ENCODE measurements at regions of chr17 and their contacts with region 1.

Region 1: DNA sequence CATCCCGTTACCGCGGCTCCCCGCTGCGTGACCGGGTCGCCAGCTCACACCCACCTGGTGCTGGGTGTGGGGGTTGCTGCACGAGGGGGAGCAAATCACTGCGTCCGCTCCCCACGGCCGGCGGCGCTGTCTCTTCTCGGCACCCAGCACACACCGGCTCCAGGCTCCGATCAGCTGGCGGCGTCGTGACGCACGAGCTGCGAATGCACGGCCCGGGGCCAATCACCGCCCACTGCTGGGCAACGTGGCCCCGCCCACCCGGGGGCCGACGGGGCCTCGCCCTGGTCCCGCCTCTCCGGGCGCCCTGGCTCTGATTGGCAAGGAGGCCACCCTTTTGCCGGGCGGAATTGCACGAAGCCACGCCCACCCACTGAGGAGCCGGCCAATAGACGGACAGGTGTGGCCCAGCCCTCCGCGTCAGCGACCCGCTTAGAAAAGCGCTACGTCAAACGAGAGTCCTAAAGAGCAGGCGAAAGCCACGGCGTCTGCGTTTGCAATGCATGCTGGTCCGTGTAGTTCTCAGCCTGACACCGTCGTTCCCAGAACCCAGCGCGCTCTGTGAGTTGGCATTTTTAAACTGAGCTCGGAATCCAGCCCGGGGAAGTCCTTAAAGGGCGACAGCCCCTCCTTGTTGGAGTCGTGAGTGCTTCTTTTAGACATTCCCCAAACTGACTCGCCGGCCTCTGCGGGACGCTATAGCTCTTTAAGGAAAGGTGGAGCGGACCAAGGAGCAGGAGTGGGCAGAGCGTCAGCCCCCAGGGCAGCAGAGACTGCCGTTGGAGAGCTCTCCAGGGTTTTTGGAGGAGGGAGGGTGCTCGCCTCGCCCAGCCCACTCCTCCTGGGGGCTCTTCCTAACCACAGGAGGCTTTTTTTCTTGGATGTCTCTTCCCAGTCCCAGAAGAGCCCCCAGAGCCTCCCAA is 6.2 kb upstream of the TLCD2 start:
- DNase-seq: peak; percentile 99 to 100 (median 100)
- ATAC-seq: peak; percentile 92
- H3K4me3 ChIP-seq: peak overlapping the region; percentile 92
- H3K4me3 Mint-ChIP-seq: peak overlapping the region; percentile 87 to 98 (median 94)
- H3K27ac ChIP-seq: peak overlapping the region; percentile 73
- H3K27ac Mint-ChIP-seq: peak overlapping the region; percentile 70 to 99 (median 93)
- H3K4me1 ChIP-seq: peaks cover 17 to 26% of the 10 kb centered on the region in 2 donors
- H3K4me1 Mint-ChIP-seq: peaks cover 19 to 45% (median 24%) of the 10 kb centered on the region in 7 donors
- H3K27me3 ChIP-seq: peaks cover 0 to 7% of the 10 kb centered on the region in 2 donors
- H3K27me3 Mint-ChIP-seq: peaks cover 0 to 9% (median 6%) of the 10 kb centered on the region in 5 donors

Region 2: GRCh38 chr17:1455797-1456599 is 260.3 kb before region 1 on chr17 and contains the start of gene CRK:
- CTCF ChIA-PET with region 1: no interaction called
- POLR2A ChIA-PET with region 1: no interaction called
- intact Hi-C with region 1: loop called (anchors 1 kb)
- DNase-seq: peak; percentile 97 to 100 (median 99)
- ATAC-seq: peak; percentile 97
- H3K4me3 ChIP-seq: peak within 1 kb of the TSS; percentile 94
- H3K4me3 Mint-ChIP-seq: peak within 1 kb of the TSS; percentile 86 to 95 (median 90)
- H3K27ac ChIP-seq: peak within 1 kb of the TSS; percentile 97
- H3K27ac Mint-ChIP-seq: peak within 1 kb of the TSS; percentile 63 to 92 (median 86)
- H3K4me1 ChIP-seq: peaks cover 18 to 37% of the 10 kb centered on the region in 2 donors
- H3K4me1 Mint-ChIP-seq: peaks cover 28 to 64% (median 48%) of the 10 kb centered on the region in 7 donors
- H3K27me3 ChIP-seq: no peaks in the 10 kb centered on the region
- H3K27me3 Mint-ChIP-seq: peaks cover 0 to 23% (median 4%) of the 10 kb centered on the region in 5 donors
- total RNA-seq, gene CRK: 16.9 to 29.0 (median 20.9) TPM

Region 3: DNA sequence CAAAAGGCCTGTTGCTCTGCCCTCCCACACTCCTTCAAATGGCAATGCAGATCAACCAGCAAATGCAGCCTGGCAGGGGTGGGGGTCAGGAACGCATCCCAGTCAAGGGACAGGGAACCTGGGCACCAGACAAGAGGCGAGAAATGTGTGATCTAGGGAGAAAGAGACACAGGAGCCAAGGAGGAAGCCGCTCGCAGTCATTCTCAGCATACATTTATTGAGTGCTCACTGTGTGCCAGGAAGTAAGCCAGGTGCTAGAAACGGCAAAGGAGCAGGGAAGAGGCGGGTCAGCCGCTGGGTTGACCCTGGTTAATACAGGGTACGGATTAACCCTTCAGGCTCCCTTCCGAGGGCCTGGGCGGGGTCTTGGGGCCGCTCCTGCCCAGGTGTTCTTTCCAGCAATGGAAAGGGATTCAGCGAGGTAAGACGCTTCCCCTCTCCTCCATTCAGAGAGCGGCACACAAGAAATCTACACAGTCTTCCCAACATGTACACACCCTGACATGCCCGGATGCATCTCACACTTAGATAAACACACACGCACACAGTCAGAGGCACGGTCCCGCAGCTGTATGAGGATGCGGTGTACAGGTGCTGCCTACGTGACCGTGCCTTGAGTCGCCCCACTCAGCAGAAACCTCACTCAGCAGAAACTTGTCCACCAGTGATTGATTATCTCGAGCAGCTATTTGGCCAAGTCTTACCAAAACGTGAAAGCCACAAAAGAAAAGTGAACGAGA is 147.1 kb before region 1 on chr17:
- CTCF ChIA-PET with region 1: no interaction called
- POLR2A ChIA-PET with region 1: no interaction called
- intact Hi-C with region 1: no loop called
- DNase-seq: no peak
- ATAC-seq: no peak
- H3K4me3 ChIP-seq: no peak overlapping the region
- H3K4me3 Mint-ChIP-seq: no peak overlapping the region
- H3K27ac ChIP-seq: no peak overlapping the region
- H3K27ac Mint-ChIP-seq: peak overlapping the region in 3 of 9 donors; percentile 23 to 63 (median 41)
- H3K4me1 ChIP-seq: peaks cover 5 to 7% of the 10 kb centered on the region in 2 donors
- H3K4me1 Mint-ChIP-seq: peaks cover 16 to 32% (median 21%) of the 10 kb centered on the region in 7 donors
- H3K27me3 ChIP-seq: no peaks in the 10 kb centered on the region
- H3K27me3 Mint-ChIP-seq: peaks cover 0 to 3% (median 0%) of the 10 kb centered on the region in 5 donors

Region 4: GRCh38 chr17:1628856-1629646 is 87.3 kb before region 1 on chr17:
- CTCF ChIA-PET with region 1: no interaction called
- POLR2A ChIA-PET with region 1: interaction called, 7 read pairs
- intact Hi-C with region 1: loop called in 1 of 2 experiments (anchors 1 kb)
- DNase-seq: peak; percentile 69 to 89 (median 84)
- ATAC-seq: peak; percentile 84
- H3K4me3 ChIP-seq: peak overlapping the region; percentile 83
- H3K4me3 Mint-ChIP-seq: peak overlapping the region; percentile 92 to 96 (median 94)
- H3K27ac ChIP-seq: peak overlapping the region; percentile 74
- H3K27ac Mint-ChIP-seq: peak overlapping the region; percentile 73 to 95 (median 87)
- H3K4me1 ChIP-seq: peaks cover 5 to 20% of the 10 kb centered on the region in 2 donors
- H3K4me1 Mint-ChIP-seq: peaks cover 17 to 26% (median 22%) of the 10 kb centered on the region in 7 donors
- H3K27me3 ChIP-seq: no peaks in the 10 kb centered on the region
- H3K27me3 Mint-ChIP-seq: peaks cover 0 to 59% (median 0%) of the 10 kb centered on the region in 5 donors

Region 5: GRCh38 chr17:1684378-1685189 is 31.8 kb before region 1 on chr17 and contains the start of gene PRPF8:
- CTCF ChIA-PET with region 1: interaction called, 4 read pairs
- POLR2A ChIA-PET with region 1: interaction called, 32 read pairs
- intact Hi-C with region 1: loop called (anchors 1 kb)
- DNase-seq: peak; percentile 89 to 99 (median 99)
- ATAC-seq: peak; percentile 99
- H3K4me3 ChIP-seq: peak within 1 kb of the TSS; percentile 96
- H3K4me3 Mint-ChIP-seq: peak within 1 kb of the TSS; percentile 89 to 100 (median 97)
- H3K27ac ChIP-seq: peak within 1 kb of the TSS; percentile 100
- H3K27ac Mint-ChIP-seq: peak within 1 kb of the TSS; percentile 95 to 100 (median 98)
- H3K4me1 ChIP-seq: peaks cover 10 to 24% of the 10 kb centered on the region in 2 donors
- H3K4me1 Mint-ChIP-seq: peaks cover 32 to 59% (median 48%) of the 10 kb centered on the region in 7 donors
- H3K27me3 ChIP-seq: no peaks in the 10 kb centered on the region
- H3K27me3 Mint-ChIP-seq: no peaks in the 10 kb centered on the region
- total RNA-seq, gene PRPF8: 388 to 554 (median 460) TPM

Region 6: DNA sequence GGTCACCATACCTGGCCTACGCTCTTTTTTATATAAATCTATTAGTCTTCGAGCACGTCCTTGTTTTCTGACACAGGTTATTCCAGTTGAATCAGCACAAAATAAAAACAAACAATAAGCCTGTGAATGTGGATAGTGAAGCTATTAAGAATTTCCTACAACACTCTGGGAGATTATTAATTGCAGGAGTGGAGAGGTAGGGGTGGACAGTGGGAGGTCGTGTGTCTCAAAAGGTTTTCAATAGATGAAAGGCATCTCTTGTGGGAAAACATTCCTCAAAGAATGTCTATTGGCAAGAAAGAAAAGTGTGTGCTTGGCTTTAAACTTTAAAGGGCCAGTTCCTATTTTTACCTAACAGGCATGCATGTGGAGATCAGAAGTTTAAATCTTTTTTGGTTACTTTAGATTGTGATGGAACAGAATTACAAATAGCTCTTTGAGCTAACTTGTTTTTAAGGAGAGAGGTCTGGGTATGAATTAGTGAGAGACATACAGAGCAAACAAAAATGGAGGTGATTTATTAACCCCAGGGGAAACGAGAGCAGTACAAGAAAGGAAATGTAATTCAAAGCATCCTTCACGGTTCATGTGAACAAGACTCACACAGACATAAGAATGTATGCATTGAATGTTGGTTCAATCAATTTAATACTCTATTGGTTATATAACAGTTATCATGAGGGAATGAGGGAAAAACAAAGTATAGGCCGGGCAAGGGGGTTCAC is 104.4 kb after region 1 on chr17:
- CTCF ChIA-PET with region 1: interaction called, 4 read pairs
- POLR2A ChIA-PET with region 1: no interaction called
- intact Hi-C with region 1: loop called (anchors 2 kb)
- DNase-seq: no peak
- ATAC-seq: no peak
- H3K4me3 ChIP-seq: no peak overlapping the region
- H3K4me3 Mint-ChIP-seq: no peak overlapping the region
- H3K27ac ChIP-seq: no peak overlapping the region
- H3K27ac Mint-ChIP-seq: peak overlapping the region in 3 of 9 donors; percentile 7 to 76 (median 51)
- H3K4me1 ChIP-seq: peaks cover 5 to 13% of the 10 kb centered on the region in 2 donors
- H3K4me1 Mint-ChIP-seq: peaks cover 16 to 36% (median 24%) of the 10 kb centered on the region in 7 donors
- H3K27me3 ChIP-seq: no peaks in the 10 kb centered on the region
- H3K27me3 Mint-ChIP-seq: no peaks in the 10 kb centered on the region

Region 7: GRCh38 chr17:2029911-2030778 is 313.8 kb after region 1 on chr17 and contains the start of gene DPH1:
- CTCF ChIA-PET with region 1: interaction called, 4 read pairs
- POLR2A ChIA-PET with region 1: interaction called, 5 read pairs
- intact Hi-C with region 1: loop called (anchors 1 kb)
- DNase-seq: peak; percentile 72 to 88 (median 83)
- ATAC-seq: peak; percentile 93
- H3K4me3 ChIP-seq: peak within 1 kb of the TSS; percentile 95
- H3K4me3 Mint-ChIP-seq: peak within 1 kb of the TSS; percentile 92 to 99 (median 96)
- H3K27ac ChIP-seq: peak within 1 kb of the TSS; percentile 85
- H3K27ac Mint-ChIP-seq: peak within 1 kb of the TSS; percentile 65 to 96 (median 89)
- H3K4me1 ChIP-seq: peaks cover 13 to 27% of the 10 kb centered on the region in 2 donors
- H3K4me1 Mint-ChIP-seq: peaks cover 17 to 43% (median 29%) of the 10 kb centered on the region in 7 donors
- H3K27me3 ChIP-seq: peaks cover 0 to 4% of the 10 kb centered on the region in 2 donors
- H3K27me3 Mint-ChIP-seq: peaks cover 9 to 38% (median 15%) of the 10 kb centered on the region in 5 donors
- total RNA-seq, gene DPH1: 47.3 to 124 (median 97.6) TPM

Region 8: GRCh38 chr17:2392252-2393173 is 676.2 kb after region 1 on chr17:
- CTCF ChIA-PET with region 1: no interaction called
- POLR2A ChIA-PET with region 1: no interaction called
- intact Hi-C with region 1: loop called in 1 of 2 experiments (anchors 2 kb)
- DNase-seq: peak; percentile 94 to 100 (median 98)
- ATAC-seq: peak; percentile 78
- H3K4me3 ChIP-seq: peak overlapping the region; percentile 89
- H3K4me3 Mint-ChIP-seq: peak overlapping the region; percentile 88 to 97 (median 94)
- H3K27ac ChIP-seq: peak overlapping the region; percentile 100
- H3K27ac Mint-ChIP-seq: peak overlapping the region; percentile 90 to 98 (median 96)
- H3K4me1 ChIP-seq: peaks cover 15 to 52% of the 10 kb centered on the region in 2 donors
- H3K4me1 Mint-ChIP-seq: peaks cover 38 to 70% (median 56%) of the 10 kb centered on the region in 7 donors
- H3K27me3 ChIP-seq: no peaks in the 10 kb centered on the region
- H3K27me3 Mint-ChIP-seq: no peaks in the 10 kb centered on the region